ENCODE measurements at regions of chr19 and their contacts with region 1.

Region 1: GRCh38 chr19:49118565-49119410 is at the start of gene C19orf73:
- DNase-seq: peak; percentile 94 to 98
- H3K4me3 ChIP-seq: peak within 1 kb of the TSS; percentile 88
- H3K4me3 Mint-ChIP-seq: peak within 1 kb of the TSS; percentile 94
- H3K27ac Mint-ChIP-seq: peak within 1 kb of the TSS; percentile 85
- H3K4me1 ChIP-seq: peaks cover 18% of the 10 kb centered on the region
- H3K4me1 Mint-ChIP-seq: peaks cover 32% of the 10 kb centered on the region
- H3K27me3 ChIP-seq: no peaks in the 10 kb centered on the region
- H3K27me3 Mint-ChIP-seq: peaks cover 4% of the 10 kb centered on the region
- CTCF ChIP-seq: no peak
- total RNA-seq, gene C19orf73: 1.7 and 2.1 TPM in 2 replicates

Region 2: DNA sequence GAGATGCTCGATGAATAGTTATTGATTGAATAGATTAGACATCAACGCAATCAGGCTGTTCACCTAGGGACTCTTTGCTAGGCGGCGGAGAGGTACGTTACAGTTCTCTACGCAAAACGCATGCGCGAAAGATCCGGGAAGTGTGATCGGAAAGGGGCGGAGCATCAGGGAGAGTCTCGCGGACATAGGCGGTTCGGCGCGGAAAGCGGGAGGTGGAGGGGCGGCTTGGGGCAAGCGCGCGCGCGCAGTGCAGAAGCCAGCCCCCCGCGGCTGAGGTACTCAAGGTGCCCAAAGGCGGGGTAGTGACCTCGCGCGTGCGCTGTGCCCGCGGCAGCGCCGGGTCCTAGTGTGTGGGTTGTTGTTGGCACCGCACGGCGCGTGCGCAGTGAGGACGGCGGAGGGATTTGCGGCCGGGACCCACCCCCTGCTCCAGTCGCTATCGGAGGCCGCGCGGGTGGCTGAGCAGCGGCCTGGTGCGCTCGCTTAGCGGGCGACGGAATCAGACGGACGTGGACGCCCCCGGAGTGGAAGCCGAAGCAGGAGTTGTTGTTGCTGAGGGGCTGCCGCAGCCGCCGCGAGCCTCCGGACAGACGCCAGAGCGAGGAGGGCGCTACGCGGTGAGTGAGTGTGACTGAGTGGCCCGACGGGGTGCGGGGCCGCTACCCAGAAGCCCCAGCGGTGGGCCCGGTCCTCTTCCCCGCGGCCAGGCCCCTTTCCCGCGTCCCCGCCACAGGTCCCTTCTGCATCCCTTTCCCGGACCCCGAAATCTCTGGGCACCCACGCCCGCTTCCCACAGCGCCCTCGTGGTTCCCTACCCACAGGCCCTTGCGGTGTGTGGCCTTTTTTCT is 33.5 kb before region 1 on chr19 and contains the start of gene SNRNP70:
- CTCF ChIA-PET with region 1: no interaction called
- POLR2A ChIA-PET with region 1: no interaction called
- intact Hi-C with region 1: loop called (anchors 1 kb)
- DNase-seq: peak; percentile 100
- H3K4me3 ChIP-seq: peak within 1 kb of the TSS; percentile 71
- H3K4me3 Mint-ChIP-seq: peak within 1 kb of the TSS; percentile 92
- H3K27ac Mint-ChIP-seq: peak within 1 kb of the TSS; percentile 78
- H3K4me1 ChIP-seq: 0 out of 2 replicates have a peak, but pooled peaks cover 7% of the 10 kb centered on the region
- H3K4me1 Mint-ChIP-seq: peaks cover 17% of the 10 kb centered on the region
- H3K27me3 ChIP-seq: no peaks in the 10 kb centered on the region
- H3K27me3 Mint-ChIP-seq: no peaks in the 10 kb centered on the region
- CTCF ChIP-seq: no peak
- total RNA-seq, gene SNRNP70: 251 and 259 TPM in 2 replicates

Region 3: GRCh38 chr19:49200238-49200862 is 81.6 kb after region 1 on chr19:
- CTCF ChIA-PET with region 1: interaction called, 41 read pairs
- POLR2A ChIA-PET with region 1: no interaction called
- intact Hi-C with region 1: loop called (anchors 5 kb)
- DNase-seq: peak; percentile 31 to 55
- H3K4me3 ChIP-seq: no peak overlapping the region
- H3K4me3 Mint-ChIP-seq: no peak overlapping the region
- H3K27ac Mint-ChIP-seq: peak overlapping the region; percentile 20
- H3K4me1 ChIP-seq: no peaks in the 10 kb centered on the region
- H3K4me1 Mint-ChIP-seq: no peaks in the 10 kb centered on the region
- H3K27me3 ChIP-seq: no peaks in the 10 kb centered on the region
- H3K27me3 Mint-ChIP-seq: no peaks in the 10 kb centered on the region
- CTCF ChIP-seq: no peak

Region 4: GRCh38 chr19:49210108-49210900 is 91.5 kb after region 1 on chr19:
- CTCF ChIA-PET with region 1: interaction called, 12 read pairs
- POLR2A ChIA-PET with region 1: no interaction called
- intact Hi-C with region 1: no loop called
- DNase-seq: peak; percentile 33 to 57
- H3K4me3 ChIP-seq: no peak overlapping the region
- H3K4me3 Mint-ChIP-seq: no peak overlapping the region
- H3K27ac Mint-ChIP-seq: no peak overlapping the region
- H3K4me1 ChIP-seq: no peaks in the 10 kb centered on the region
- H3K4me1 Mint-ChIP-seq: peaks cover 12% of the 10 kb centered on the region
- H3K27me3 ChIP-seq: no peaks in the 10 kb centered on the region
- H3K27me3 Mint-ChIP-seq: no peaks in the 10 kb centered on the region
- CTCF ChIP-seq: no peak

Region 5: DNA sequence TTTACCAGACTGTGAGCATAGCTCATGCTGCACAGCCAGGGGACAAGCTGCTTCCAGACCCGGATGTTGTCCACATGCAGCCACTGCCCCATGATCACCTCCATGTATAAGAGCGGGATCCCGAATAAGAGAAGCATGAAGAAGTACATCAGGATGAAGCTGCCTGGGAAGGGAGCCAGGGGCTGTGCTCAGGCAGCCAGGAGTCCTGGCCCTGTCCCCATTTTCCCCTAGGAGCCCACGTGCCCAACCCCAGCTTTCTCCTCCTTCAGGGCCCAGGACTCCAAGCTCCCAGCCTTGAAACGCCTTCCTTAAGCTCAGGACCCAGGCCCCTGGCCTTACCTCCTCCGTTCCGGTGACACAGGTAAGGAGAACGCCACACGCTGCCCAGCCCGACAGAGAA is 136.9 kb after region 1 on chr19:
- CTCF ChIA-PET with region 1: no interaction called
- POLR2A ChIA-PET with region 1: no interaction called
- intact Hi-C with region 1: no loop called
- DNase-seq: no peak
- H3K4me3 ChIP-seq: no peak overlapping the region
- H3K4me3 Mint-ChIP-seq: no peak overlapping the region
- H3K27ac Mint-ChIP-seq: no peak overlapping the region
- H3K4me1 ChIP-seq: no peaks in the 10 kb centered on the region
- H3K4me1 Mint-ChIP-seq: no peaks in the 10 kb centered on the region
- H3K27me3 ChIP-seq: no peaks in the 10 kb centered on the region
- H3K27me3 Mint-ChIP-seq: peaks cover 5% of the 10 kb centered on the region
- CTCF ChIP-seq: no peak

Region 6: DNA sequence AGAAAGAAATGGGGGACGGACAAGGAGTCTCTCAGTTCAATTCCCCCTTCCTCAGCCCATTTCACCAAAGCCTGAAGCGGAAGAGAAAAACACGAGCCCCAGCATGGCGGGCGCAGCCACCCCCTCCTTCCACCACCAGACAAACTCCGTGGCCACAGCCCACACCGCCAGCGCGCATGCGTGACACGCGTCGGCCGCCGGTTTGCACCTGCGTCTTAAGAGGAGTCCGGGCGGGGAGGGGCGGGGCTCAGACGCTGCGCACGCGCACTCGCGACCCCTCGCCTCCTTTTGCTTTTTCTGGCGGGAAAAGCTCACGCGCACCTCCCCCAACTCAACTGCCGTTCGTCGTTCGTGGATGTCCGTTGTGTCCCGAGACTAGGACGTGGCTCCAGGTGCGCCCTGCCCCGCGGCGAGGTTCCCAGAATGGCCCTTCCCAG is 269.2 kb after region 1 on chr19 and contains the start of gene KASH5:
- CTCF ChIA-PET with region 1: no interaction called
- POLR2A ChIA-PET with region 1: no interaction called
- intact Hi-C with region 1: no loop called
- DNase-seq: peak; percentile 81 to 90
- H3K4me3 ChIP-seq: peak within 1 kb of the TSS; percentile 39
- H3K4me3 Mint-ChIP-seq: peak within 1 kb of the TSS; percentile 69
- H3K27ac Mint-ChIP-seq: peak within 1 kb of the TSS; percentile 63
- H3K4me1 ChIP-seq: no peaks in the 10 kb centered on the region
- H3K4me1 Mint-ChIP-seq: peaks cover 12% of the 10 kb centered on the region
- H3K27me3 ChIP-seq: no peaks in the 10 kb centered on the region
- H3K27me3 Mint-ChIP-seq: peaks cover 7% of the 10 kb centered on the region
- CTCF ChIP-seq: no peak
- total RNA-seq, gene KASH5: 0.56 and 1.00 TPM in 2 replicates

Measured in Caco-2 (cell line).